ENCODE measurements at regions of chr18 and their contacts with region 1.

Region 1: DNA sequence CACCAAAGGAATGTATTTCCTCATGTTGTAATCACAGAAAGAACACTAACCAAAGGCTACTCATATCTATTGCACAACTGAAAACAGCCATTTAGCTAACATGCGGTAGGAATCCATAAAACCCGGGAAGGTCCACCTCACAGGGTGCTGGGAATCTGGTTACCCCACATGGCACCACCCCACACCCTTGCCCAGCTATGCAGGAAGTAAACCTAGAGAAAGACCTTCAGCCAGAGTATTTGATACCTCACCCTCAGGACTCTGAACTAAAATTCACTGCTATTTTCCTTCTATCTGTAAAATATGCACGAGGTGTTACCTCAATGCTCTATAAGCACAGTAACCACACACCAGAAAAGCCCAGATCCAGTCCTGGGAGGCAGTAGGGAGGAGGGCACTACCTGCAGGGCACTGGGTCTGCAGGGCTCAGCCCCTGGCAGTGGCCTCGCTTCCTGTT is 45.8 kb downstream of the PTPN2 start:
- DNase-seq: peak in 3 of 14 experiments; percentile 33 to 40 (median 39)
- ATAC-seq: no peak
- H3K4me3 ChIP-seq: peak overlapping the region; percentile 35
- H3K4me3 Mint-ChIP-seq: peak overlapping the region; percentile 30
- H3K27ac ChIP-seq: peak overlapping the region in 1 of 2 donors; percentile 81
- H3K27ac Mint-ChIP-seq: peak overlapping the region; percentile 77
- H3K4me1 ChIP-seq: peaks cover 24% of the 10 kb centered on the region
- H3K4me1 Mint-ChIP-seq: peaks cover 55% of the 10 kb centered on the region
- H3K27me3 ChIP-seq: no peaks in the 10 kb centered on the region
- H3K27me3 Mint-ChIP-seq: no peaks in the 10 kb centered on the region
- CTCF ChIP-seq: no peak

Region 2: GRCh38 chr18:12803096-12803936 is 34.9 kb before region 1 on chr18:
- CTCF ChIA-PET with region 1: no interaction called
- POLR2A ChIA-PET with region 1: no interaction called
- intact Hi-C with region 1: loop called in 1 of 2 experiments (anchors 5 kb)
- DNase-seq: no peak
- ATAC-seq: no peak
- H3K4me3 ChIP-seq: no peak overlapping the region
- H3K4me3 Mint-ChIP-seq: no peak overlapping the region
- H3K27ac ChIP-seq: no peak overlapping the region
- H3K27ac Mint-ChIP-seq: no peak overlapping the region
- H3K4me1 ChIP-seq: no peaks in the 10 kb centered on the region
- H3K4me1 Mint-ChIP-seq: peaks cover 17% of the 10 kb centered on the region
- H3K27me3 ChIP-seq: no peaks in the 10 kb centered on the region
- H3K27me3 Mint-ChIP-seq: no peaks in the 10 kb centered on the region
- CTCF ChIP-seq: no peak

Region 3: DNA sequence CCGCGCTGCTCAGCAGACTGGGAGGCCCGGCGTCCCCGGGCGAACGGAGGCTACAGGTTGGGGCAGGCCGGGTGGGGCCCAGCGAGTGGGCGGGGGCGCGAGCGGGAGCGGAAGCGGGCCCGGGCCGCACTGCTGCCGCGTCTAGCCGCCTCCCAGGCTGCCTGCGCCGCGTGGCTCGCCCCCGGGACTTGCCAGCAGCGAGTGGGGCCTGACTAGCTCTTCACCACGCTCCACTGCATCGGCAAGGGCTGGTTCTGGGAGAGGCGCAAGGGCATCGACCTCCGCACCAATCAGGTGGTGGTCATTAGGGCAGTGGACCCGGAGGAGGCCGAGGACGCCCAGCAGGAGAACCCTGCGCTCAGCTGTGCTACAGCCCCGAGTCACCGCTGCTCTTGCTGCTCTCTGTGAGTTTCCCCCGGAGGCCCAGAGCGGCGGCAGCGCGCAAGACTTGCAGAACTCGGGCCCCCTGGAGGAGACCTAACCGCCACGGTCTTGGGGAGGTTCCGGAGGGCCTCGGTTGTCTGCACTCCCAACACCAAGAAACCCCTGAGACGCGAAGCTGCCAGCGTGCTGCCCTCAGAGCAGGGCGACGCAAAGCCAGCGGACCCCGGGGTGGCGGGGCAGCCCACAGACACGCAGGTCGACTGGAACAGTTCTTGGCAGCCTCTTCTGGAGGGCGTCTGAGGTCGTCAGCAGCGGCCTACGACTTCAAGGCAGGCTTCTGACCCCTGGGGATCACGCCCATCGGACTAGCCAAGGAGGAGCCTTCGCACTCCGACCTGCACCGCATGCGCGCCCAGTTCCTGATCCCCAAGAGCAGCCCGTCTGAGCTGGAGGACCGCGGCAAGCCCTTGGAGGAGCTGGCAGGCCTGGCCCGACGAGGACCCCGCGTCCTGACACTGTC is 73.1 kb after region 1 on chr18:
- CTCF ChIA-PET with region 1: no interaction called
- POLR2A ChIA-PET with region 1: no interaction called
- intact Hi-C with region 1: no loop called
- DNase-seq: peak in 13 of 14 experiments; percentile 21 to 75 (median 49)
- ATAC-seq: peak; percentile 84
- H3K4me3 ChIP-seq: peak overlapping the region; percentile 48
- H3K4me3 Mint-ChIP-seq: peak overlapping the region; percentile 66
- H3K27ac ChIP-seq: no peak overlapping the region
- H3K27ac Mint-ChIP-seq: no peak overlapping the region
- H3K4me1 ChIP-seq: peaks cover 17% of the 10 kb centered on the region
- H3K4me1 Mint-ChIP-seq: peaks cover 4% of the 10 kb centered on the region
- H3K27me3 ChIP-seq: peaks cover 0 to 5% of the 10 kb centered on the region in 2 experiments
- H3K27me3 Mint-ChIP-seq: no peaks in the 10 kb centered on the region
- CTCF ChIP-seq: no peak

Region 4: GRCh38 chr18:13406049-13406615 is 567.9 kb after region 1 on chr18:
- CTCF ChIA-PET with region 1: no interaction called
- POLR2A ChIA-PET with region 1: no interaction called
- intact Hi-C with region 1: no loop called
- DNase-seq: no peak
- ATAC-seq: no peak
- H3K4me3 ChIP-seq: no peak overlapping the region
- H3K4me3 Mint-ChIP-seq: no peak overlapping the region
- H3K27ac ChIP-seq: no peak overlapping the region
- H3K27ac Mint-ChIP-seq: peak overlapping the region; percentile 12
- H3K4me1 ChIP-seq: peaks cover 6% of the 10 kb centered on the region
- H3K4me1 Mint-ChIP-seq: peaks cover 19% of the 10 kb centered on the region
- H3K27me3 ChIP-seq: no peaks in the 10 kb centered on the region
- H3K27me3 Mint-ChIP-seq: no peaks in the 10 kb centered on the region
- CTCF ChIP-seq: no peak

Measured in CD4-positive, alpha-beta T cell (primary cell).